ENCODE measurements at regions of chr16 and their contacts with region 1.

Region 1: GRCh38 chr16:56513972-56514371 is 5.9 kb downstream of the BBS2 start:
- DNase-seq: no peak
- H3K4me3 ChIP-seq: no peak overlapping the region
- H3K27ac ChIP-seq: peak overlapping the region in 2 of 4 donors; percentile 2 to 55
- H3K4me1 ChIP-seq: peaks cover 13 to 60% (median 28%) of the 10 kb centered on the region in 3 donors
- H3K27me3 ChIP-seq: no peaks in the 10 kb centered on the region
- CTCF ChIP-seq: peak; percentile 51 to 81 (median 70)
- POLR2A ChIP-seq: no peak

Region 2: GRCh38 chr16:56600398-56600999 is 86.5 kb after region 1 on chr16:
- intact Hi-C with region 1: loop called (anchors 5 kb)
- DNase-seq: no peak
- H3K4me3 ChIP-seq: no peak overlapping the region
- H3K27ac ChIP-seq: no peak overlapping the region
- H3K4me1 ChIP-seq: peaks cover under 1 to 3% (median 2%) of the 10 kb centered on the region in 3 donors
- H3K27me3 ChIP-seq: peaks cover 0 to 6% (median 0%) of the 10 kb centered on the region in 4 donors
- CTCF ChIP-seq: peak in 5 of 6 experiments; percentile 60 to 77 (median 71)
- POLR2A ChIP-seq: no peak

Region 3: GRCh38 chr16:57152096-57153093 is 638.4 kb after region 1 on chr16:
- intact Hi-C with region 1: no loop called
- DNase-seq: no peak
- H3K4me3 ChIP-seq: no peak overlapping the region
- H3K27ac ChIP-seq: no peak overlapping the region
- H3K4me1 ChIP-seq: peaks cover 12 to 19% (median 14%) of the 10 kb centered on the region in 3 donors
- H3K27me3 ChIP-seq: no peaks in the 10 kb centered on the region
- CTCF ChIP-seq: no peak
- POLR2A ChIP-seq: no peak

Measured in esophagus squamous epithelium (tissue), 5 donors.